GM10248 (cell line): ENCODE measurements at regions of chr2 and their contacts with region 1.

Region 1: GRCh38 chr2:132733094-132733493 is 63.1 kb upstream of the LYPD1 start:
- DNase-seq: no peak
- CTCF ChIP-seq: no peak

Region 2: DNA sequence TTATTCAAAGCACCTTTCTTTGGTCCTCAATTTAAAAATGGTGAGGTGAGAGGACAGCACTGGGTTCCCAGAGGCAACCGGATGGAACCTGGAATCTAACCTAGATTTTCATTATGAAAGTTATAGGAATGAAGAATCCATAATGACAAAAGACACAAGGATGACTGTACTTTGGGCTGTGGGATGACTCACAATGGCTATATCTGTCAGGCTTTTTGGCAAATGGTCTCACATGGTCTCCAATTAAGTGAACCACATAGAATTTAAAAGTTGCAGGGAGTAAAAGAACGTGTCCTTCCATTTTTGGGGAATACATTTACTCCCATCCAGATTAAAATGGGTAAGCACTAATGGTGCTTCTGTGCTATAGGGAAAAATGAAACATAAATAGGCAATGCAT is 31.3 kb before region 1 on chr2:
- CTCF ChIA-PET with region 1: no interaction called
- POLR2A ChIA-PET with region 1: no interaction called
- DNase-seq: no peak
- CTCF ChIP-seq: no peak

Region 3: DNA sequence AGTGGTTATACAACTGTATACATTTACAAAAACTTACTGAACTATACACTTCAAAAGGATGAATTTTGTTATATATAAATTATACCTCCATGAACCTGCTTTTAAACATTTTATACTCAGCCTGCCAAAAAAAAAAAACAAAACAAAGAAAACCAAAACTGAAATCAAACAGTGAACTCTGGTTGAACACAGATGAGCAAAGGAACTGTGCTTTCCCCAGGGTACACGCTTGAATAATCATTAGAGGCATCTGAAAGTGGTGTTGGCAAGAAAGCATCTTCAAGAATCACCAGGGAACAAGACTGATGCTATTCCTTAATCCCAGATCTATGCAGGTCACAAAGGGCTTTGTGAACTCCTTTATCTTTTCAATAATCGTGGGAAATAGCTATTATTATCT is 14.0 kb after region 1 on chr2:
- CTCF ChIA-PET with region 1: interaction called, 11 read pairs
- POLR2A ChIA-PET with region 1: no interaction called
- DNase-seq: peak; percentile 31
- CTCF ChIP-seq: no peak